ENCODE measurements at regions of chr20 and their contacts with region 1.

Region 1: GRCh38 chr20:324177-325044 is 941 bp upstream of the SOX12 start:
- H3K4me3 ChIP-seq: peak overlapping the region; percentile 43
- H3K27ac ChIP-seq: peak overlapping the region; percentile 99
- H3K4me1 ChIP-seq: peaks cover 10% of the 10 kb centered on the region
- CTCF ChIP-seq: peak; percentile 87

Region 2: DNA sequence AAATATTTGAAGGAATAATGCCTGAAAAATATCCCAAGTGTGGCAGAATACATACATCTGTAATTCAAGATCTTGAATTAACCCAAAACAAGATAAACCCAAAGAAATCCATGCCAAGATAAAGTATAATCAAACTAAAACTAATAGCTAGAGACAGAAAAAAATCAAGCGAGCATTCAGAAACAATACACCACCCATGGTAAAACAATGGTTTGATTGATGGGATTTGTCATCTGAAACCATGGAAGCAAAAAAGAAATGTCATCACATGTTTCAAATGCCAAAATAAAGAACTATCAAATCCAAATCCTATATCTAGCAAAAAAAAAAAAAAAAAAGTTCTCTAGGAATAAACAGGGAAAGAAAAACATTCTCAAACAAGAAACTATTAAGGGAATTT is 172.3 kb before region 1 on chr20:
- CTCF ChIA-PET with region 1: no interaction called
- POLR2A ChIA-PET with region 1: no interaction called
- H3K4me3 ChIP-seq: no peak overlapping the region
- H3K27ac ChIP-seq: no peak overlapping the region
- H3K4me1 ChIP-seq: no peaks in the 10 kb centered on the region
- CTCF ChIP-seq: no peak

Region 3: GRCh38 chr20:257419-257818 is 67.0 kb before region 1 on chr20 and contains the start of gene DEFB132:
- CTCF ChIA-PET with region 1: no interaction called
- POLR2A ChIA-PET with region 1: no interaction called
- H3K4me3 ChIP-seq: no peak within 1 kb of the TSS
- H3K27ac ChIP-seq: no peak within 1 kb of the TSS
- H3K4me1 ChIP-seq: no peaks in the 10 kb centered on the region
- CTCF ChIP-seq: no peak

Region 4: GRCh38 chr20:297098-297924 is 27.1 kb before region 1 on chr20 and contains the start of gene ZCCHC3:
- CTCF ChIA-PET with region 1: interaction called, 21 read pairs
- POLR2A ChIA-PET with region 1: interaction called, 74 read pairs
- H3K4me3 ChIP-seq: peak within 1 kb of the TSS; percentile 53
- H3K27ac ChIP-seq: peak within 1 kb of the TSS; percentile 98
- H3K4me1 ChIP-seq: peaks cover 27% of the 10 kb centered on the region
- CTCF ChIP-seq: peak; percentile 87

Region 5: DNA sequence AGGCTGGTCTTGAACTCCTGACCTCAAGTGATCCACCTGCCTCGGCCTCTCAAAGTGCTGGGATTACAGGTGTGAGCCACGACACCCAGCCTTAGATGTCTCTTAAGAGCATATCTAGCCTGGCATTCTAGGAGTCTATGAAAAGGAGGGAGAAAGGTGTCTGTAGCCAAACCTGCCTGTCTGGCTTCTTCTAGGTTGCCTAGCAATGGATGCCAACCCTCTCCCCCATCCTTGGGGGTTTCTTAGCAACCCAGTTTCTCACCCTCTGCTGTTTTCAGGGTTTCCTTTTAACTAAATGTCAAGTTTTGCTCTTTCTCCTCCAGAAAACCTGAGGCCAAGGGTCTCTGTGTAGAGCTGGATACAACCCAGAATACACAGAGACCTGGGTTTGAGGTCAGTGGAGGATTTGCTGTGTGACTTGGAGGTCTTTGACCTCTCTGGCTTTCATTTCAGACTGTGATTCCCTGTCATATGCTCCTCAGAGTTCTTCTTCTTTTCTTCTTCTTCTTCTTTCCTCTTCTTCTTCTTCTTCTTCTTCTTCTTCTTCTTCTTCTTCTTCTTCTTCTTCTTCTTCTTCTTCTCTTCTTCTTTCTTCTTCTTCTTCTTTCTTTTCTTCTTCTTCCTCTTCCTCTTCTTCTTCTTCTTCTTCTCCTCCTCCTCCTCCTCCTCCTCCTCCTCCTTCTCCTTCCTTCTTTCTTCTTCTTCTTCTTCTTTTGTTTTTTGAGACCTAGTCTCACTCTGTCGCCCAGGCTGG is 11.5 kb after region 1 on chr20:
- CTCF ChIA-PET with region 1: no interaction called
- POLR2A ChIA-PET with region 1: no interaction called
- H3K4me3 ChIP-seq: no peak overlapping the region
- H3K27ac ChIP-seq: no peak overlapping the region
- H3K4me1 ChIP-seq: no peaks in the 10 kb centered on the region
- CTCF ChIP-seq: no peak